HEK293 (cell line): ENCODE measurements at regions of chr2 and their contacts with region 1.

Region 1: GRCh38 chr2:27428213-27428977 is at the start of gene NRBP1:
- H3K4me3 ChIP-seq: peak within 1 kb of the TSS; percentile 70
- H3K27ac ChIP-seq: peak within 1 kb of the TSS; percentile 96
- H3K4me1 ChIP-seq: peaks cover 11% of the 10 kb centered on the region
- CTCF ChIP-seq: peak; percentile 69

Region 2: GRCh38 chr2:27380626-27381545 is 47.5 kb before region 1 on chr2 and contains the start of gene ZNF513:
- CTCF ChIA-PET with region 1: interaction called, 3 read pairs
- POLR2A ChIA-PET with region 1: interaction called, 16 read pairs
- H3K4me3 ChIP-seq: peak within 1 kb of the TSS; percentile 72
- H3K27ac ChIP-seq: peak within 1 kb of the TSS; percentile 82
- H3K4me1 ChIP-seq: no peaks in the 10 kb centered on the region; the same call in 1 of the 2 replicates
- CTCF ChIP-seq: no peak

Region 3: DNA sequence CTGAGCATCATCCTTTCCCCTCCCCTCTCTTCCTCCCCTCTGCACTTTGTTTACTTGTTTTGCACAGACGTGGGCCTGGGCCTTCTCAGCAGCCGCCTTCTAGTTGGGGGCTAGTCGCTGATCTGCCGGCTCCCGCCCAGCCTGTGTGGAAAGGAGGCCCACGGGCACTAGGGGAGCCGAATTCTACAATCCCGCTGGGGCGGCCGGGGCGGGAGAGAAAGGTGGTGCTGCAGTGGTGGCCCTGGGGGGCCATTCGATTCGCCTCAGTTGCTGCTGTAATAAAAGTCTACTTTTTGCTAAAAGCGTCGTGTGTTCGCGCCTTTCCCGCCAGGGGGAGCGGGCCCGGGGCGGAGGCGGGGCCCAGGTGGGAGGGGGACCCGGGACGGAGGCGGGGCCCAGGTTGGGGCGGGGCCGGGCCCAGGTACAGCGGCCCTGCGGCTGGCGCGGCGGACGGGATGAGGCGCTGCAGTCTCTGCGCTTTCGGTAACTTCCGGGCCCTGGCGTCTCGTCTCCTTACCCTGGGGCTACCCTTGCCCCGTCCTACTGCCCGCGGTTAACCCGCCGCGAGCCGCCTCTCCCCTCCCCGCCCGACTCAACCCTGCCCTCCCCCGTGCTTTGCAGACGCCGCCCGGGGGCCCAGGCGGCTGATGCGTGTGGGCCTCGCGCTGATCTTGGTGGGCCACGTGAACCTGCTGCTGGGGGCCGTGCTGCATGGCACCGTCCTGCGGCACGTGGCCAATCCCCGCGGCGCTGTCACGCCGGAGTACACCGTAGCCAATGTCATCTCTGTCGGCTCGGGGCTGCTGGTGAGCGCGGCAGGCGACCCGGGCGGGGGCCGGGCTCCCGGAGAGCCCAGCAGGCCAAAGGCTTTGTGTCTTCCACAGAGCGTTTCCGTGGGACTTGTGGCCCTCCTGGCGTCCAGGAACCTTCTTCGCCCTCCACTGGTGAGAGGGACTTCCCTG is 13.8 kb after region 1 on chr2 and contains the start of gene KRTCAP3:
- CTCF ChIA-PET with region 1: interaction called, 11 read pairs
- POLR2A ChIA-PET with region 1: interaction called, 5 read pairs
- H3K4me3 ChIP-seq: no peak within 1 kb of the TSS
- H3K27ac ChIP-seq: 0 out of 2 replicates have a peak within 1 kb of the TSS, but pooled peaks have one; percentile 9
- H3K4me1 ChIP-seq: no peaks in the 10 kb centered on the region
- CTCF ChIP-seq: no peak

Region 4: DNA sequence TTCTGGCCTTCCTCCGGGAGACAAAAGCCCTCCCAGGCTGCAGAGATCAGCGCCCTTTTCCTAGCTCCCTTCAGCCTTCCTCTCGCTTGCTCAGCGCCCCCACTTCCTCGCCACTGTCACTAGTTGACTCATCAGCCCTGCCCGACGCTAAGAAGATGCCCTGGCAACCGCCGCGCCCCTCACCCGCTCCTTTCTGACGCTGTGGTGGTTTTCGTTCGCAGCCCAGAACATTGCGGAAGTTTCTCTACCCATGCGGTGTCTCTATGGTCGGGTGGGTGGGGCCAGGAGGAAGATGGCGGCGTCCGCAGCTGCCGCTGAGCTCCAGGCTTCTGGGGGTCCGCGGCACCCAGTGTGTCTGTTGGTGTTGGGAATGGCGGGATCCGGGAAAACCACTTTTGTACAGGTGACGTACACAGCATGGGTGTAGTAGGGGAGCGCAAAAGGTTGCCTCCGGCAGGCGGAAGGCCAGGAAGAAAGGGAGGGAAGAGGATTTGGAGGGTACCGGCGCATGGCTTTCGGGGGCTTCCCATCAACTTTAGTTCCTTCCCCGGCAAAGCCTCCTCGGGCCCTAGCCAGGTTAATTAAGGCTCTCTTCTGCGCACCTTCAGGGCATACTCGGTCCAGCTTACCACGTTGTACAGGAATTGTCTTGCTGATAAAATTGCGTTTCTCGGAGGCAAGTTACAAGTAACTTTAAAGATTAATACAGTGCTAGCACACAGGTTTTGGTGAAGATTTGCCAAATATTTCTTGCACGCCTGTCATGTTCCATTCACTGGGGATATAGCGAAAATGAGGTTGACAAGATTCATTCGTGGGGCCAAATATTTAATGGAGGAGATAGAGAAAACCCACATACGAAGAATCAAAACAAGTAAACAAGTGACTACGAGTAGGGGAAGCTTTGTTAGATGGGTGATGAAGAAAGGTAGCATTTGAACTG is 200.6 kb after region 1 on chr2 and contains the starts of genes CCDC121 and GPN1:
- CTCF ChIA-PET with region 1: interaction called, 3 read pairs
- POLR2A ChIA-PET with region 1: interaction called, 19 read pairs
- H3K4me3 ChIP-seq: peak within 1 kb of the TSS; percentile 55
- H3K27ac ChIP-seq: peak within 1 kb of the TSS; percentile 42; the same call in 1 of the 2 replicates
- H3K4me1 ChIP-seq: 0 out of 2 replicates have a peak, but pooled peaks cover 2% of the 10 kb centered on the region
- CTCF ChIP-seq: no peak; the same call in 1 of the 2 replicates